Activated CD4-positive, alpha-beta T cell treated with anti-CD3 and anti-CD28 coated beads for 36 hours (primary cell): ENCODE measurements at regions of chr7 and their contacts with region 1.

Region 1: GRCh38 chr7:129210256-129210988 is 14.4 kb upstream of the AHCYL2 start:
- DNase-seq: peak; percentile 87
- ATAC-seq: peak; percentile 92
- H3K4me3 Mint-ChIP-seq: no peak overlapping the region
- H3K27ac Mint-ChIP-seq: no peak overlapping the region
- H3K4me1 Mint-ChIP-seq: no peaks in the 10 kb centered on the region
- H3K27me3 Mint-ChIP-seq: no peaks in the 10 kb centered on the region

Region 2: DNA sequence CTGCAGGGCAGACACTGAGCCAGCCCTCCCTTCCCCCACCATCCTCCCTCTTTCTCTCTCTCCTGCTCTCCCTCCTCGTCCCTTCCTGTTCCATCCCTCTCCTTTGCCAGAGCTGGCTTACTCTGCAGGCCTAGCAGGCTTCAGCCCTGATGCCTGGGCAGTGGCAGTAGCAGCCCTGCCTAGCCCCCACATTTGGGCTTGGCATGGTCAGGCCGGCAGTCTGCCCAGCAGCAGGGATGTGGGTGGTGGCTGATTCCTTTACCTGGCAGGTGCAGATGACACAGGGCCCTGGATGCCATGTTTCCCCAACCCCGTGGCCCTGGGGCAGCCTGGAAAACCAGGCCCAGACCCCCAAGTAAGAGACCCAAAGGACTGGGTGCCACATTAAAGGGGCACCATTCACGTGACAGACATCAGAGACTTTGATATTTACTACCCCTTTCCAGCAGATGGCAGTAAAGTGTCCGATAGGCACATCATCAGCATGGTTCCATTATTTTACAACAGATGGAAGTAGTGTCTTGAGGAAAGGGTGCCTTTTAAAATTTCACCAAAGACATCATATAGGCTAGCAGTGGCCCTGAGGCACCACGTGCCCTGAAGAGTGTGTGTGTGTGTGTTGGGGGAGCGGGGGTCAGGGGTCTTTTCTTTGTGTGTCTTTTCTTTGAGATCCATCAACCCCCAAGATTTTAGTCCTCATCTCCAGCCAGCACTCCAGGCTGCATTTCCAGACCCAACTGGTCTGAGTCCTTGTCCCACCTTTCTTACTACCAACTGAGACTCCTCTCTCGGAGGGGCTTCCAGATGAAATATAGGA is 305.8 kb before region 1 on chr7:
- CTCF ChIA-PET with region 1: no interaction called
- POLR2A ChIA-PET with region 1: no interaction called
- intact Hi-C with region 1: loop called in 1 of 2 experiments (anchors 2 kb)
- DNase-seq: no peak
- ATAC-seq: peak; percentile 89
- H3K4me3 Mint-ChIP-seq: no peak overlapping the region
- H3K27ac Mint-ChIP-seq: no peak overlapping the region
- H3K4me1 Mint-ChIP-seq: peaks cover 3% of the 10 kb centered on the region
- H3K27me3 Mint-ChIP-seq: peaks cover 19% of the 10 kb centered on the region

Region 3: DNA sequence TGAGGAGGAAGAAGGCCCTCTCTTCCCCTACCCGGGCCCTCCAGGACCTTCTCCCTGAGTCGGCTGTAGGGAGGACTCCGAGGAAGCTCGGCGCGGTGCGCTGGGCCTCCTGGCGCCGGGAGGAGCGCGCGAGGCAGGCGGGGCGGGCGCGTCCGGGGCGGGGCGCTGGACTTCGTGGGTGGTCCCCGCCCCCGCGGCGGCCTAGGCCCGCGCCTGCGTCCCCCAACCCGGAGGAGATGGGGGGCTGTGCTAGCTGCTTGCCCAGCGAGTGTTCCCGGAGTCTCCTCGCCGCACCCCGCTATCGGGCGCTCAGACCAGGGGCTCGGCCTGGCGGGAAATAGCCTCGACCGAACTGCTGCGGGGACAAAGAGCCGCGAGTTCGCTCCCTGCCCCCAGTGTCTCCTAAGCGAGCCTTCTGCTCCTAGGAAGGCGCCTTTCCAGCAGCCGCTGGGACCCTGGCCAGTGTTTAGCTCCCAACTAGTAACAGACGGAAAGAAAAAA is 41.2 kb before region 1 on chr7:
- CTCF ChIA-PET with region 1: interaction called, 58 read pairs
- POLR2A ChIA-PET with region 1: no interaction called
- intact Hi-C with region 1: loop called (anchors 1 kb)
- DNase-seq: peak; percentile 55
- ATAC-seq: peak; percentile 60
- H3K4me3 Mint-ChIP-seq: peak overlapping the region; percentile 45
- H3K27ac Mint-ChIP-seq: peak overlapping the region; percentile 28
- H3K4me1 Mint-ChIP-seq: peaks cover 15% of the 10 kb centered on the region
- H3K27me3 Mint-ChIP-seq: peaks cover 2% of the 10 kb centered on the region